Stomach (tissue), 19 donors: ENCODE measurements at regions of chr21 and their contacts with region 1.

Region 1: GRCh38 chr21:34187935-34188334 is 114.6 kb downstream of the MRPS6 start:
- DNase-seq: no peak
- H3K4me3 ChIP-seq: no peak overlapping the region
- H3K27ac ChIP-seq: no peak overlapping the region
- H3K4me1 ChIP-seq: peaks cover 0 to 19% (median 10%) of the 10 kb centered on the region in 4 donors
- H3K27me3 ChIP-seq: no peaks in the 10 kb centered on the region
- CTCF ChIP-seq: no peak
- EP300 ChIP-seq: no peak
- POLR2A ChIP-seq: no peak

Region 2: GRCh38 chr21:34086887-34087306 is 101.0 kb before region 1 on chr21:
- intact Hi-C with region 1: loop called (anchors 10 kb)
- DNase-seq: peak in 1 of 2 donors; percentile 23
- H3K4me3 ChIP-seq: no peak overlapping the region
- H3K27ac ChIP-seq: no peak overlapping the region
- H3K4me1 ChIP-seq: peaks cover 12 to 83% (median 58%) of the 10 kb centered on the region in 4 donors
- H3K27me3 ChIP-seq: no peaks in the 10 kb centered on the region
- CTCF ChIP-seq: no peak
- EP300 ChIP-seq: no peak
- POLR2A ChIP-seq: no peak

Region 3: DNA sequence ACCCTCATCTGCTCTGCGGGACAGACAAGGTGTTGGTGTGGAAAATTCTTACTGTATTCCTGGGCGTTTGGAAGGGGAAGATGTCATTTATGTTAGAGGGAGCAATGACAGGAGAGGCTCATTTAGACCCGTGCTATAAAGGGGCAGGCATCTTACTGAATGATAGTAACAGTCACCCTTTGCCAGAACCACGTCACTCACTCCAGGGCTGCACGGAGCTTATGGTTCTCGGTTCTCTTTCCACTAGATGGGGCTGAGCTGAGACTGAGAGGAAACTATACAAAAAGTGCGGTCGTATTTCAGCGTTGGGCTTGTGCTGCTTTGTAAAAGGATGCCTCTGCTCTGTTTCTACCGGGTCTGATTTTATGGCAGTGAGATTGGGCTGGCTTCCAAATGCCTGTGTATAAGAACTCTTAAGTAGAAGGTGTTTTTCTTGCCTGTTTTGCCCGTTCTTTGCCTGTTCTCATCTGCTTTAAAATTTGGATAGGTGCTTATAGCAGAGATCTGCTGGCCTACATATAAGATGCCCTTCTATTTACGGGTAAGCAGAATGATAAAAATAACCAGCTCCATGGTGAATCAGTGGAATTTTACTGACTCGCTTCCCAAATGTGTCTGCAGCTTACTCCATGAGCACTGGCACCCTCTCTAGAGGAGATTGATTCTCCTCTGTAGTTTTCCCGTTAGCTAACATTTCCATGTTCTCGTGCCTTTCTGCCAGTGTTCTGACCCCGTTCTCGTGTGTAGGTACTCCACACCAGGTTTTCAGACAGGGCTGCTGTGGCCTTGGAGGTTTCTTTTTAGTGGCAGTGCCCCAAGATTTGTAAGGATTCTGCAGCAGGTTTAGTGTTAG is 58.7 kb before region 1 on chr21:
- intact Hi-C with region 1: no loop called
- DNase-seq: peak; percentile 35 to 88
- H3K4me3 ChIP-seq: no peak overlapping the region
- H3K27ac ChIP-seq: peak overlapping the region; percentile 26 to 84 (median 73)
- H3K4me1 ChIP-seq: peaks cover 29 to 78% (median 54%) of the 10 kb centered on the region in 4 donors
- H3K27me3 ChIP-seq: no peaks in the 10 kb centered on the region
- CTCF ChIP-seq: no peak
- EP300 ChIP-seq: no peak
- POLR2A ChIP-seq: no peak